ENCODE measurements at regions of chr5 and their contacts with region 1.

Region 1: DNA sequence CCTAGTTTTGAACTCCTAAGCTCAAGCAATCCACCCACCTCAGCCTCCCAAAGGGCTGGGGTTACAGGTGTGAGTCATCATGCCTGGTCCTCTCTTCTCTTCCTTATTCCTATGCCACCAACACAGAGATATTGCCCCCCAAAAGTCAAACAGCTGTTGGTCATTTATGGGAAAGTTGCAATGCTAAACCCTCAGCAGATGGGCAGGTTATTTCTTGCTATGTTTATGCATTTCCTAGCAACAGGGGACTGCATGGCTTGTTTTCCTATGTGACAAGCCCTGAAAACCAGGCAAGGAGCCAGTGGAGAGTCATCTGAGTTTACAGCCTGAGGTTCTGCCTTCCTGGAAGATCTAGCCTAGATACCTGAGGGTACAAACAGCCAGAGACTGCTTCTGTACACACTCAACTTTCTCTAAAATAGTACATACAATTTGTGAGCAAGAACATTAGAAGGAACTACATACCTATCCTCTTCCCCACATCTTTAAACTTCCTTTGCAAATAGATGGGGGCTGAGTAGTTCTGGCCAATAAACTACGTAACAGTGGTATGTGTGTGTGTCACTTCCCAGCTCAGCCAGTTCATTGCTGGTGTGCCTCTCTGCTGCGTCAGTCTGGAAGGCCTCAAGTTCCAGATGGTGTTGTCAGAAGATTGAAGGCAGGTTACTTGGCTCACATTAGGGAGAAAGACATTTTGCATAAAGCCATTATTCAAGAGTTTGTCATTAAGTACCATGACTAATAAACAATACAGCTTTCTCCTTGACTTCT is 65.4 kb downstream of the CSNK1A1 start:
- DNase-seq: peak; percentile 74 to 82
- ATAC-seq: peak; percentile 85 to 91 (median 88)
- H3K4me3 ChIP-seq: no peak overlapping the region
- H3K27ac ChIP-seq: peak overlapping the region; percentile 92
- H3K4me1 ChIP-seq: peaks cover 67% of the 10 kb centered on the region
- H3K27me3 ChIP-seq: no peaks in the 10 kb centered on the region
- CTCF ChIP-seq: no peak

Region 2: DNA sequence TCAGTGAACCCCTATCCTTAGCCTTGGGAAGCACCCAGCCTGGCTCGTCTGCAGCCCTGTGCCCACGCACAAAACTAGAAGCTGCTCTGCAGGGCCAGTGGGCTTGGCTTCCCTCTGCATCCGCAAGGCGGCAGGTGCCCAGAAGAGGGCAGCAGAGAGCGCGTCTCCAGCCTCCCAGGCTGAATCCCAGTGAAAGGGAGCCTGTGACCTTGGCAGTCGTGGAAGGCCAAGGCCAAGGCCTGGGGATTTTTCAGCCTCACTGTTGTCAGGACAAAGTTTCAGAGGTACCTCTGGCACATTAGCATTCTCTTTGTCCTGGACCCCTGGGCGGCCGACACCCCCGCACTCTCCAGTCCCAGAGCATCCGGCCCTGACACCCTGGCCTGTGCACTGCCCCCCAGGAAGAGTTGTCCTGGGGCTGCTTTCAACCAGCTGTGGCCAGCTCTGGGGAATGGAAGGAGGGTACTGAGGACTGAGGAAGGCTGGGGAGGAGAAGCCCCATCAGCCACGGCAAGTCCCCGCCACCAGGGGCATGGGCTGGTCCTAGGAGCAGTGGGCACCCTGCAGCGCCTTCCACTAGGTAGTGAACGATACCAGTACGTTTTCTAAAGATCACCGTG is 43.2 kb before region 1 on chr5:
- intact Hi-C with region 1: loop called (anchors 2 to 5 kb)
- DNase-seq: peak; percentile 82 to 91
- ATAC-seq: peak; percentile 91 to 95 (median 92)
- H3K4me3 ChIP-seq: no peak overlapping the region
- H3K27ac ChIP-seq: peak overlapping the region; percentile 73
- H3K4me1 ChIP-seq: peaks cover 22% of the 10 kb centered on the region
- H3K27me3 ChIP-seq: no peaks in the 10 kb centered on the region
- CTCF ChIP-seq: peak; percentile 93

Region 3: GRCh38 chr5:149448831-149449714 is 36.8 kb before region 1 on chr5:
- intact Hi-C with region 1: loop called in 1 of 2 experiments (anchors 5 kb)
- DNase-seq: no peak
- ATAC-seq: no peak
- H3K4me3 ChIP-seq: no peak overlapping the region
- H3K27ac ChIP-seq: peak overlapping the region; percentile 96
- H3K4me1 ChIP-seq: peaks cover 67% of the 10 kb centered on the region
- H3K27me3 ChIP-seq: no peaks in the 10 kb centered on the region
- CTCF ChIP-seq: peak; percentile 35

Region 4: GRCh38 chr5:149466457-149466972 is 19.3 kb before region 1 on chr5:
- intact Hi-C with region 1: loop called in 1 of 2 experiments (anchors 2 kb)
- DNase-seq: peak; percentile 62 to 72
- ATAC-seq: peak; percentile 77 to 91 (median 86)
- H3K4me3 ChIP-seq: peak overlapping the region; percentile 7
- H3K27ac ChIP-seq: peak overlapping the region; percentile 86
- H3K4me1 ChIP-seq: peaks cover 36% of the 10 kb centered on the region
- H3K27me3 ChIP-seq: no peaks in the 10 kb centered on the region
- CTCF ChIP-seq: no peak

Region 5: GRCh38 chr5:149551200-149552037 is 65.6 kb after region 1 on chr5 and contains the start of gene CSNK1A1:
- intact Hi-C with region 1: loop called in 1 of 2 experiments (anchors 2 kb)
- DNase-seq: peak; percentile 99
- ATAC-seq: peak; percentile 92 to 95 (median 94)
- H3K4me3 ChIP-seq: peak within 1 kb of the TSS; percentile 91
- H3K27ac ChIP-seq: peak within 1 kb of the TSS; percentile 99
- H3K4me1 ChIP-seq: peaks cover 33% of the 10 kb centered on the region
- H3K27me3 ChIP-seq: no peaks in the 10 kb centered on the region
- CTCF ChIP-seq: peak; percentile 90
- total RNA-seq, gene CSNK1A1: 139 to 394 (median 224) TPM

Region 6: DNA sequence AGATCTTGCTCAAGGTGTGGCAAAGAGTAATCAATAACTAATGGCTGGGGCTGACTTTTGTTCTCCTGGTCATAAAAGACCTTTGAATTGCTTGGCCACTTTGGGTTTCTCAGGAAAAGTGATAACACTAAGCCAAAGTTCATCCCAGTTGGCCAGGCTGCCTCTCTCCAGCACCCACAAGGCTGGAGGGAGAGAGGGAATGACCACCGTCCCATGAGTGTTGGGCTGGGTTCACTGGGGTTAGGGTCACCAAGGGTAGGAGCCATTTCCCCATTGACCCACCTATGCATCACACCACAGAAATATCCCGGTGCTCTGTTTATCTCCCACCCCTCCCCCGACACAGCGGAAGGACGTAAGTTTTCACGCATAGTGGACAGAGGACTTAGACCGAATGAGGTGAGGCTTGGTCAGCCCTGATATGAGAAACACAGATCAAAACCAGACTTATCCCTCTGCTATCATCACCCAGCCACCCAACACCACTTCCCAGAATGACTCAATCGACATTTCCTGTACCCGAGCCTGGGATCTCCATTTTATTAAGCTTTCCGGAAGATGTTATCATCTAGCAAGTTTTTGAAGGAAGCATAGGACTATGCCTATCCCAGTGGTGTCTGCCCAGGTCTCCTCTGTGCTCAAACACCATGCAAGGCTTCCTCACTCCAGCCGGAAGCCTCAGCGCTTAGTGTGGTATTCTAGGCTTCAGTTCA is 217.2 kb after region 1 on chr5:
- intact Hi-C with region 1: no loop called
- DNase-seq: no peak
- ATAC-seq: no peak
- H3K4me3 ChIP-seq: no peak overlapping the region
- H3K27ac ChIP-seq: no peak overlapping the region
- H3K4me1 ChIP-seq: peaks cover 3% of the 10 kb centered on the region
- H3K27me3 ChIP-seq: no peaks in the 10 kb centered on the region
- CTCF ChIP-seq: no peak

Region 7: DNA sequence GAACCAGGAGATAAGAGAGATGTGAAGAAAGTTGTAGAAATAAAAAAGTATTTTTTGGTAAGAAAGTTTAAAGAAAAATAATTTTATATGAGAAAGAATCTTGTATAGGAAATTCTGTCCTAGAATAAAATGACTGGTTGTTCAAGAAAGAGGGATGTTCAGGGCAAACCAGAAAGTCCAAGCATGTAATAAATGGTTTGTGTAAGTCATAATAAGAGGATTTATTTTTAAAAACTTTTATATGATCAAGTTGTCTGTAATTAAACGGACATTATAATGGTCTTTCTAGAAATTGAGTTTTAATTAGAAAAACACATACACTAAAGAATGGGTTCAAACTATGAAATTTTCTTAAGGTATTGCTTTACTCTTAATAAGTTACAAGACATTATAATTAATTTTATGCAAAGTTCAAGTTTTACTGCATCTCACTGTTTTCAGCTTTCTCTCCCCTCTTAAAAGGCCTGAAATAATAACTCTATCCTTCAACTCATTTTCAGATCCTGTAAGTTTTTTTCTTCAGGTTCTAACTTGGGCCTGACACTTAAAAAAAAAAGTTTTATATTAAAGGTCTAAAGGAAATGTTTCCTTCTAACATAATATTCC is 1475.1 kb after region 1 on chr5:
- intact Hi-C with region 1: no loop called
- DNase-seq: no peak
- ATAC-seq: no peak
- H3K4me3 ChIP-seq: no peak overlapping the region
- H3K27ac ChIP-seq: no peak overlapping the region
- H3K4me1 ChIP-seq: no peaks in the 10 kb centered on the region
- H3K27me3 ChIP-seq: no peaks in the 10 kb centered on the region
- CTCF ChIP-seq: no peak